GM10248 (cell line): ENCODE measurements at regions of chr2 and their contacts with region 1.

Region 1: DNA sequence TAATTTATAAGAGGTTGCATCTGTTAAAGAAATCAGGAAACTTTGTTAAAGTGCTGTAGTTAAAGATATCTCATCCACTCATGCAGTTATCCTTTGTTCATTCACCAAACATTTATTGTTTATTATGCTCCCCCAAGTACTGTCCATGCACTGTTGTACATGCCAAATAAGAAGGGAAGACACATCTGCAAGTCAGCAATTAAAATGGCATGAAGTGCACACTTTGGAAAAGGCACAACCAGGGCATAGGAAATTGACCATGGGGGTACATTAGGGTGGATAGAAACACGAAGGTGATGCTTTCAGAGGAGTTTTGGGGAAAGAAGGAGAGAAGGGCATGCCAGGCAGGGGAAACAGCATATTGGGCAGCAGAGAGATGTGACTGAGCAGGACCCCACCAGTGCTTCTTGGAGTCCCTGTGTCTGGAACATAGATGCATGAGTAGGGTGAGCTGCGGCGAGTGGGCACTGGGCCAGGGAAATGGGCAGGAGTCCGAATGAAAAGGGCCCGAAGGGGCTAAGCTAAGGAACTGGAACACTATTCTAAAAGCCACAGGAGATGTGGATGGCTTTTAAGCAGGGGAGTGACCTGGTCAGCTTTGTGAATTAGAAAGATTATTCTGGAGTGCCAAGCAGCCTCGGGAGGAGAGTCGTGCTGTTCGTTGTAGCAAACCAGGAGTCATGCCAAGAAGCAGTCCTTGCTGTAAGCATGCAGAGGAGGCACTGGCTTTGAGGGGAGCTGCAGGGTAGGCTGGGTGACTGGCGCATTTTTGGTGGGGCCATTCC is 316.3 kb downstream of the AGPS start:
- DNase-seq: no peak
- CTCF ChIP-seq: no peak

Region 2: DNA sequence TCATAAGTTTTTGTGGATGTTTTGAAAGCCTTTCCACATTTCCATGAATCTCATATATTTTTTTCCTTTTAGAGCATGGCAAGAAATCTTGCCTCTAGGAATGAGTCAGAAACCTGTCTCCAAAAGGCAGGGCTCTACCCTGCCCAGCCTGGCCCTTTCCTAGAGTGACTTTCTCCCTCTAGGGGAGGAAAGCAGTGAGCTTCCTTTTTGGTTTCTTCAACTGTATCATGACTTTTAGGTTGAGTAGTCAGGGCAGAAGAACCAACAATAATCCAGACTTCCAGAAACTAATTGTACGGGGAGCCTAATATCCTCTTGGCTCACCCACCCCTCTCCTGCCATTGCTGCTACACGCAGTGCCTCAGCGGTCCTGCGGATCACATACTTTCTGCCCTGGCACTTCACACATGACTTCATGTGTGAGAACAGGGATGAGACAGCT is 16.0 kb before region 1 on chr2:
- CTCF ChIA-PET with region 1: interaction called, 12 read pairs
- POLR2A ChIA-PET with region 1: no interaction called
- DNase-seq: no peak
- CTCF ChIP-seq: no peak